Activated T-helper 1 cell treated with anti-CD3 and anti-CD28 coated beads, Interleukin-12 subunit alpha, Interleukin-12 subunit beta, Interleukin-2, Interleukin-4 antibody, amounts not matched to agents 30 ng/mL and 10 ng/mL and 1 ng/mL, durations not matched to agents 14 hours and 24 hours and 36 hours (primary cell): ENCODE measurements at regions of chr1 and their contacts with region 1.

Region 1: DNA sequence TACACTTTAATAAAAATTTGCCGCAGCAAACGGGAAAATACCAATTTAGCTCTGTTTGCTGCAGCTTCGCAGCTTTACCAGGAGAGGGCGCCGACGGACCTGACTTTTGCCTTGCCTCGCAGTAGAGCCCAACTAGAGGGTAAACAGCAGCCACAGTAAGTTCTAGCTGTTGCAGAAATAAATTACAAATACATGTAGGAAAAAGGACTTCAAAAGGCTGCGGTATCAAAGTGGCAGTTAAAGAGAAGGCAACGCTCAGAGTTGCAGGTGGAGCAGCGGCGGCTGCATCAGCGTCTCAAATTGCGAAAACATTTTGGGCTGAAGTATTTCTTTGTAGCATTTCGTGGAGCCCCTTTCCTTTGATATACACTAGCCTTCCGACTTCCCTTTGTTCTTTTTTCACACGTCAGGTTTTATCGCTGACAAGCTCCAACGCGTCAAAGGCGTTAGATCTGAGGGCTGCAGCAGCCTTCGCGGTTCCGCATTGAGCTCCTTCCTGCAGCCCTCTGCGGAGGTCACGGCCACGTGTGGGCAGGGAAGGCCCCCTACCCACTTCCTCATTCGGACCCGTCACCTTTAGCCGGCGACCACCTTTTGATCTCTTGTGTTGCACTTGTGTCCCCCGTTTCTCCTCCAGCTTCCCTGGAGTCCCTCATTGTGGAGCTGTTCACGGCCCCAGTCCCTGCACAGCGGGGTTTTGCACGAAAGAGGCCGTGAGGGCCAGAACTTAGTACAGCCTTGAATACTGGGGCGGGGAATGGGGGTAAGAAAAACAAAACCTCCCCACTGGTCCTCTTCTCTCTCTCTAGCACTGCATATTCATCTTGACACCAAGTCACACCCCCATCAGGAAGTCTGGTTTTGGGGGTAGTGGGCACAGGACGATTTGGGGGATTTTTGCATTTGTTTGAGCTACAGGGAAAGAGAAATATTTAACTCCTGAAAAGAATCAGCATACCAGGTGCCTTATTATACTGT is 72.8 kb downstream of the S1PR1 start:
- DNase-seq: peak; percentile 62
- H3K4me3 Mint-ChIP-seq: peak overlapping the region; percentile 80
- H3K27ac Mint-ChIP-seq: peak overlapping the region; percentile 75
- H3K4me1 Mint-ChIP-seq: peaks cover 75% of the 10 kb centered on the region
- H3K27me3 Mint-ChIP-seq: peaks cover 8% of the 10 kb centered on the region

Region 2: GRCh38 chr1:101357444-101357986 is 47.9 kb after region 1 on chr1:
- intact Hi-C with region 1: loop called (anchors 1 kb)
- DNase-seq: peak; percentile 69
- H3K4me3 Mint-ChIP-seq: no peak overlapping the region
- H3K27ac Mint-ChIP-seq: no peak overlapping the region
- H3K4me1 Mint-ChIP-seq: peaks cover 9% of the 10 kb centered on the region
- H3K27me3 Mint-ChIP-seq: peaks cover 23% of the 10 kb centered on the region

Region 3: GRCh38 chr1:101388904-101389546 is 79.4 kb after region 1 on chr1:
- intact Hi-C with region 1: loop called (anchors 1 kb)
- DNase-seq: peak; percentile 26
- H3K4me3 Mint-ChIP-seq: no peak overlapping the region
- H3K27ac Mint-ChIP-seq: no peak overlapping the region
- H3K4me1 Mint-ChIP-seq: peaks cover 19% of the 10 kb centered on the region
- H3K27me3 Mint-ChIP-seq: peaks cover 5% of the 10 kb centered on the region

Region 4: DNA sequence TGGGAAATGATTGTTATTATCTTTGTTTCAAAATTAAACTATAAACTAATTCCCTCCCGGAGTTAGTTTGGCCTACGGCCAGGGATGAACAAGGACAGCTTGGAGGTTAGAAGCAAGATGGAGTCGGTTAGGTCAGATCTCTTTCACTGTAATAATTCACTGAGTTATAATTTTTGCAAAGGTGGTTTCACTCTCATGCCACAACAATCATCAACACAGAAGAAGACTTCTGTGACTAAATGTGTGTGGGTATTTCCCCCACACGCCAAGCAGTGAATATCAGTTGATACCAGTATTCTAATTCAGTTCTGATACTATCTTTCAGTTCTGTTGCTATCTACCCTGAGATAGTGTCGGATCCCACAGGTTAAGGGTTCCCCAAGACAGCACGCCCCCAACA is 142.3 kb after region 1 on chr1:
- intact Hi-C with region 1: loop called (anchors 5 kb)
- DNase-seq: no peak
- H3K4me3 Mint-ChIP-seq: no peak overlapping the region
- H3K27ac Mint-ChIP-seq: no peak overlapping the region
- H3K4me1 Mint-ChIP-seq: peaks cover 34% of the 10 kb centered on the region
- H3K27me3 Mint-ChIP-seq: peaks cover 7% of the 10 kb centered on the region

Region 5: DNA sequence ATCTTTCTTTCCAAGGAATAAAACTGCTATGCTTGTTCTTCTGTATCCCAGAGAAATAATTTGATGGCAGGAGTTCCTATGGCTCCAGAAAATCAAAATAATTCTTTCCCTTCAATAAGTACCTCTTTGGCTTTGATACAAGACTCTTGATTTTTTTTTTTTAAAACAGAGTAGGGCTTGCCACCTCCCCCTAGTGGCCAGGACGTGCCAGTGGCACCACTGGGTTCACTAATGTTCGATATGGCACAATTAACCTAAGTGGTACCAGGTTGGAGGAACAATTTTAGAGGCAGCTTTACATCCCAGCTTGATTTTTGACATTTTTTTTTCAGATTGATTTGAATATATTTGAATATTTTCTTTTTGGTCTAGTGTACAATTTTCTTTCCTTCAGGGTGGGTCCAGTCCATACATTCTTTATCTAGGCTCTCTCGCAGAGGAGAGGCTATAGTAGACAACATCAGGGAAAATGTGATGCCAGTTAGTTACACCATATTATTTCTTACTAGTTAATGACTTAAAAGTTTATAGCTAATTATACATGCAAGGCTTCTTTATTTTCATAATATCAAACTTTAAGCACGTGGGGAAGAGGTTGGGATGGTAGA is 258.1 kb after region 1 on chr1:
- intact Hi-C with region 1: loop called (anchors 1 kb)
- DNase-seq: peak; percentile 16
- H3K4me3 Mint-ChIP-seq: no peak overlapping the region
- H3K27ac Mint-ChIP-seq: no peak overlapping the region
- H3K4me1 Mint-ChIP-seq: no peaks in the 10 kb centered on the region
- H3K27me3 Mint-ChIP-seq: peaks cover 5% of the 10 kb centered on the region